ENCODE measurements at regions of chr9 and their contacts with region 1.

Region 1: GRCh38 chr9:123091459-123091858 is 58.0 kb downstream of the GPR21 start:
- DNase-seq: no peak
- ATAC-seq: no peak
- H3K4me3 Mint-ChIP-seq: no peak overlapping the region
- H3K27ac Mint-ChIP-seq: no peak overlapping the region
- H3K4me1 Mint-ChIP-seq: no peaks in the 10 kb centered on the region
- H3K27me3 Mint-ChIP-seq: no peaks in the 10 kb centered on the region
- CTCF ChIP-seq: no peak

Region 2: GRCh38 chr9:123102375-123103110 is 11.1 kb after region 1 on chr9:
- CTCF ChIA-PET with region 1: interaction called, 21 read pairs
- POLR2A ChIA-PET with region 1: interaction called, 3 read pairs
- intact Hi-C with region 1: no loop called
- DNase-seq: no peak
- ATAC-seq: no peak
- H3K4me3 Mint-ChIP-seq: no peak overlapping the region
- H3K27ac Mint-ChIP-seq: peak overlapping the region; percentile 22
- H3K4me1 Mint-ChIP-seq: no peaks in the 10 kb centered on the region
- H3K27me3 Mint-ChIP-seq: no peaks in the 10 kb centered on the region
- CTCF ChIP-seq: peak; percentile 24

Measured in activated CD8-positive, alpha-beta T cell treated with anti-CD3 and anti-CD28 coated beads for 36 hours (primary cell).